CD14-positive monocyte (primary cell): ENCODE measurements at regions of chr1 and their contacts with region 1.

Region 1: GRCh38 chr1:114282751-114283403 is 129.2 kb upstream of the SYT6 start:
- DNase-seq: peak; percentile 75 to 81 (median 80)
- H3K4me3 ChIP-seq: no peak overlapping the region
- H3K4me3 Mint-ChIP-seq: no peak overlapping the region
- H3K27ac ChIP-seq: no peak overlapping the region
- H3K27ac Mint-ChIP-seq: no peak overlapping the region
- H3K4me1 ChIP-seq: no peaks in the 10 kb centered on the region
- H3K4me1 Mint-ChIP-seq: no peaks in the 10 kb centered on the region
- H3K27me3 ChIP-seq: no peaks in the 10 kb centered on the region
- H3K27me3 Mint-ChIP-seq: peaks cover 1 to 14% (median 5%) of the 10 kb centered on the region in 3 donors
- CTCF ChIP-seq: peak; percentile 86

Region 2: DNA sequence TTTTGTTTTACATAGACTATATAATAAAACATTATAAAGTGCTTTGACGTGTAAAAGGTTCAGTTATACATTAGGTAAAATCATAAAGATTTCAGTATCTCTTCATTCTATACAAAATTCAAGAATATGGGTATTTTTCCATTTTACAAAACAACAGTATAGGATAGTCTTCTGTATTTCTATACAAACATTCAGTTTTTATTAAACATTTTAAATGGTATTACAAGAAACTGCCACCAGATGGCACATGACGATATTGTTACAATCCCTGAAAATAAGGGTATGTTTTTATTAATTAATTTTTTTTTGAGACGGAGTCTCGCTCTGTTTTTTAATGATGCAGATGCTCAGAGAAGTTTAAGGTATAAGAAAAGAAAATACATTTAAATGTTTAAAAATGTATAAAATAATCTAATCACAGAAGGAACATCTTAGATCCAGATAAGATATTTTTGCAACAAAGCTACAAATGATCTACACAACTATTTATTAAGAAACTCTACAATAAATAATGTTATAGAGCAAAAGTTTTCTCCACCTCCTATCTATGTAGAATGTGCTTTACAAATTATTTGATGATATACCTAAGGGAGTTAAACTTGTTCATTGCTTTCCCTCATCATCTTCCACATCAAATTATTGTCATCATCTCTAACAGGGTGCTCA is 447.1 kb before region 1 on chr1:
- intact Hi-C with region 1: loop called in 1 of 2 experiments (anchors 10 kb)
- DNase-seq: peak; percentile 34 to 68 (median 39)
- H3K4me3 ChIP-seq: no peak overlapping the region
- H3K4me3 Mint-ChIP-seq: no peak overlapping the region
- H3K27ac ChIP-seq: no peak overlapping the region
- H3K27ac Mint-ChIP-seq: no peak overlapping the region
- H3K4me1 ChIP-seq: no peaks in the 10 kb centered on the region
- H3K4me1 Mint-ChIP-seq: no peaks in the 10 kb centered on the region
- H3K27me3 ChIP-seq: no peaks in the 10 kb centered on the region
- H3K27me3 Mint-ChIP-seq: peaks cover 0 to 1% (median 0%) of the 10 kb centered on the region in 3 donors
- CTCF ChIP-seq: peak; percentile 83

Region 3: DNA sequence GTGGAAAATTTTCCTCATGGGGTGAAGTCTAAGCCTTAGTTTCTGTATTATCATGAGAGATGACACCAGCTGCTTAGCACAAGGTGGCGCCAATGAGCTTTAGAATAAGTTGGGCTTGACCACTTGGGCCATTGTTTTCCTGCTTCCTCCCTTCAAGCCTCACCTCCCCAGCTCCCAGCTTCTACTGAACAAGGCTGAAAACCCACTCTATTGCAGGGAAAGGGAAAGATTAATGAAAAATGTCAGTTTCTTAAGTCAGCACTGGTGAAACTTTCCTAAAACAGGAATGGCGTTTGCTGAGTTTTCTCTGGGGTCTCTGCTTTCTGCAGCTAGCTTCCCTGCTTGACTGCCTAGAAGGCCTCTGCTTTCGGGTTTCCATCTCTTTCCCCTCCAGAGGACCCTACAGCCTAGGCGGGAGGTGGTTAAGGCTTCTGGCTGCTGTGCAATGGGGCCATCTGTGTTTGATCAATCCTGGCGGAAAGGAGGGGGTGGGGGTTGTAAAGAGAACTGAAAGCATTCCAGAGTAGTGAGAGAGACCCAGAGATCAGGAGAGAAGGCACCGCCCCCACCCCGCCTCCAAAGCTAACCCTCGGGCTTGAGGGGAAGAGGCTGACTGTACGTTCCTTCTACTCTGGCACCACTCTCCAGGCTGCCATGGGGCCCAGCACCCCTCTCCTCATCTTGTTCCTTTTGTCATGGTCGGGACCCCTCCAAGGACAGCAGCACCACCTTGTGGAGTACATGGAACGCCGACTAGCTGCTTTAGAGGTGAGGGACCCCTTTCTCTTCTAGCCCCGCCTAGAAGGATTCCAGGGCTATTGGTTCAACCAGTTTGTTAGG is 303.8 kb before region 1 on chr1 and contains the start of gene OLFML3:
- intact Hi-C with region 1: loop called (anchors 2 kb)
- DNase-seq: peak; percentile 67 to 75 (median 74)
- H3K4me3 ChIP-seq: peak within 1 kb of the TSS in 1 of 3 experiments; percentile 46
- H3K4me3 Mint-ChIP-seq: peak within 1 kb of the TSS; percentile 68 to 71
- H3K27ac ChIP-seq: peak within 1 kb of the TSS; percentile 9 to 33
- H3K27ac Mint-ChIP-seq: peak within 1 kb of the TSS in 5 of 7 donors; percentile 26 to 68 (median 57)
- H3K4me1 ChIP-seq: peaks cover 62 to 73% of the 10 kb centered on the region in 2 donors
- H3K4me1 Mint-ChIP-seq: peaks cover 72% of the 10 kb centered on the region
- H3K27me3 ChIP-seq: no peaks in the 10 kb centered on the region
- H3K27me3 Mint-ChIP-seq: peaks cover 8 to 11% (median 10%) of the 10 kb centered on the region in 3 donors
- CTCF ChIP-seq: peak; percentile 81
- polyA plus RNA-seq, gene OLFML3: 0.08 to 0.37 (median 0.28) TPM

Region 4: DNA sequence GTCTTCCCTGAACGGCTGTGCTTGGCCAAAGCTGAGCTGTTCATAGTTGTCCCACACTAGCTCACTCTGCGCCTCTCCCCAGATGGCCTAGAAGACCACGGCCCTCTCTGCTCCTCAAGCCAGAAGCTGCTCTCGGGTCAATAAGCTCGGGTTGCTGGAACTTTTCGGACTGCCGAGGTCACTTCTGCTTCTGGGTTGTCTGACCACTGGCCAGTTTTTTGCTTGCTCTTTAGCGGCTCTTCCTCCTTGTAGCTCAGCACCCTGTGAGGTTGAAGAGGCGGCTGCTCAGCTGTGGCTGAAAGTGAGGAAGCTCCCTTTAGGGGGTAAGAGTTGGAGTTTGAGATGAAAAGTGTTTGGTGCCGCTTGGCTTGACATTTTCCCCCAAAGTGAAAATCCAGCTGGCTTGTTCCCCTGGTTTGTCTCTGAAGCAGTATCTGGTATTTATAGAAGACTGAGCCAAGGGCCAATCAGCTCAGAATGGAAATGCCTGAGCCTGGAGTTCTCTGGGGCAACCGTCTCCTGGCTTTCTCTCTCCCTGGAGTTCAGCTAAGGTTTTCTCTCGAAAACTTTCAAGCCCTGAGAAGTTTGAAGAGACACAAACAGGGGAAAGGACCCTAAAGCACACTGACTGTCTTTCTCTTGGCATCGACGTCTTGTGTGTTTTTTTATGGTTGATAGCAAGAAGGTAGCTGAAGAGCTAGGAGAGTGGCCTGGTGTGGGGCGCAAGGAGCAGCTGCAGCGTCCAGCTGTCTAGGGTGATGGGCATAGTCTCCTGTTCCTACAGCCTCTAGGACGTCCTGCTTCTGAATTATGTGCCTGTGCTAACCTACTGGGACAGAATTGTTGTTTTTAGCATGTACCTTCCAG is 201.2 kb before region 1 on chr1:
- intact Hi-C with region 1: loop called in 1 of 2 experiments (anchors 10 kb)
- DNase-seq: peak; percentile 47 to 60 (median 50)
- H3K4me3 ChIP-seq: no peak overlapping the region
- H3K4me3 Mint-ChIP-seq: peak overlapping the region in 1 of 2 donors; percentile 61
- H3K27ac ChIP-seq: no peak overlapping the region
- H3K27ac Mint-ChIP-seq: peak overlapping the region in 5 of 7 donors; percentile 57 to 83 (median 61)
- H3K4me1 ChIP-seq: peaks cover 33 to 37% of the 10 kb centered on the region in 2 donors
- H3K4me1 Mint-ChIP-seq: peaks cover 51% of the 10 kb centered on the region
- H3K27me3 ChIP-seq: no peaks in the 10 kb centered on the region
- H3K27me3 Mint-ChIP-seq: peaks cover 0 to 3% (median 0%) of the 10 kb centered on the region in 3 donors
- CTCF ChIP-seq: no peak